Heart left ventricle (tissue), 16 donors: ENCODE measurements at regions of chr4 and their contacts with region 1.

Region 1: DNA sequence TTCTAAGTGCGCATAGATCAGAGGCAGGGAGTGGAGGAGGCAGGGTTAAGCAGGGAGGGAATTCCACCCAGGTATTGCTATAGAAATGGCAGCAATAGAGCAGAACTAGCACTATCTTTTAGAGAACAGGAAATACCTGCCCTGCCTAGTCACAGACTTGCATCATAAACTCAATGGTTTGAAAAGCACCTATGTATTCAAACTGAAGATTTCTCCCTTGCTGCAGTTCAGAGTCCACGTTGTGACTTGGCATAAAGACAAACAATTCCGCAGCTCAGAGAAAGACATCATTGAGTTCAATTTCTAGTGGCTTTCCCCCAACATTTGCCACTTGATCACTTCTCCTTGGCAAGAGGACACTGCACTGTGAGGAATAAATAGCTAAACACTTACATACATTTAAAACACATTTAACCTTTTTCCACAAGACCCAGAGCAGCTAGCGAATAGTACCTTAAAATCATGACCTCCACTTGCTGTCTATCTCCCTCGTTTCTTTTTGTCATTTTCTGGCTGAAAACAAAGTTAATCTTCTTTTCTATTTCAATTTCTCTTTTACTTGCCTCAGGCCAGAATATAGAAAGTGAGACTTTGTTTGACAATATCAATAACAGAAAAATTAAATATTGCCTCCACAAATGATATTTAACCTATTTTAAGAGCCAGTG is 42.4 kb downstream of the SLC7A11 start:
- DNase-seq: no peak
- ATAC-seq: peak in 1 of 4 donors; percentile 29
- H3K4me3 ChIP-seq: no peak overlapping the region
- H3K27ac ChIP-seq: peak overlapping the region in 1 of 12 donors; percentile 24
- H3K4me1 ChIP-seq: peaks cover 0 to 9% (median 0%) of the 10 kb centered on the region in 12 donors
- H3K27me3 ChIP-seq: no peaks in the 10 kb centered on the region
- CTCF ChIP-seq: no peak
- POLR2A ChIP-seq: no peak

Region 2: GRCh38 chr4:138392751-138393308 is 193.1 kb after region 1 on chr4:
- intact Hi-C with region 1: loop called in 2 of 10 experiments (anchors 2 to 10 kb)
- DNase-seq: no peak
- ATAC-seq: no peak
- H3K4me3 ChIP-seq: no peak overlapping the region
- H3K27ac ChIP-seq: no peak overlapping the region
- H3K4me1 ChIP-seq: peaks cover 0 to 5% (median 0%) of the 10 kb centered on the region in 12 donors
- H3K27me3 ChIP-seq: no peaks in the 10 kb centered on the region
- CTCF ChIP-seq: no peak
- POLR2A ChIP-seq: no peak

Region 3: DNA sequence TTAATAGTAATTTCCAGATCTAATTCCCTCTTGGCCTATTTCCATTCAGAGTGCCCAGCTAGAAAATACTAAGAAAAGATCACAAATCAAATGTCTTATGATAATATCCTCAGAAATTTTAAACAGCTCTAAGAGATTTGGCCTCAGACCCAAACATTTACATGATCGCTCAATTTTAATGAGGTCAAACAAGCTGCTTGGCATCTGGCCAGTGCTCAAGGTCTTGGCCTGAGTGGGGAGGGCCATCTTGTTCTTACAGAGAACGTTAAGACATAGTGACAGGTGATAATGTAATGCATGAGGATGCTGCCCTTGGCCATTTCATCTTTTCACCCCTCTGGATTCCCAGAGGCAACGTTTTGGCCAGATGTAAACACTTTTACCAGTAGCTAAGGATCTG is 201.6 kb after region 1 on chr4:
- intact Hi-C with region 1: loop called in 3 of 10 experiments (anchors 2 to 10 kb)
- DNase-seq: peak; percentile 21 to 71 (median 63)
- ATAC-seq: peak in 1 of 4 donors; percentile 54
- H3K4me3 ChIP-seq: no peak overlapping the region
- H3K27ac ChIP-seq: peak overlapping the region in 3 of 12 donors; percentile 28 to 53 (median 29)
- H3K4me1 ChIP-seq: peaks cover 0 to 36% (median 7%) of the 10 kb centered on the region in 12 donors
- H3K27me3 ChIP-seq: no peaks in the 10 kb centered on the region
- CTCF ChIP-seq: no peak
- POLR2A ChIP-seq: no peak